Ascending aorta (tissue), 2 donors: ENCODE measurements at regions of chr2 and their contacts with region 1.

Region 1: GRCh38 chr2:182077451-182078142 is 91.9 kb downstream of the PPP1R1C start:
- DNase-seq: no peak
- H3K4me3 ChIP-seq: no peak overlapping the region
- H3K27ac ChIP-seq: no peak overlapping the region
- H3K4me1 ChIP-seq: peaks cover 0 to 3% of the 10 kb centered on the region in 2 donors
- H3K27me3 ChIP-seq: no peaks in the 10 kb centered on the region
- CTCF ChIP-seq: peak; percentile 27 to 79 (median 71)

Region 2: GRCh38 chr2:181953881-181954537 is 123.6 kb before region 1 on chr2:
- intact Hi-C with region 1: loop called (anchors 2 kb)
- DNase-seq: peak in 1 of 2 donors; percentile 72
- H3K4me3 ChIP-seq: peak overlapping the region; percentile 20 to 55
- H3K27ac ChIP-seq: no peak overlapping the region
- H3K4me1 ChIP-seq: no peaks in the 10 kb centered on the region
- H3K27me3 ChIP-seq: no peaks in the 10 kb centered on the region
- CTCF ChIP-seq: peak in 2 of 3 experiments; percentile 63 to 72